Panc1 (cell line): ENCODE measurements at regions of chr13 and their contacts with region 1.

Region 1: GRCh38 chr13:99908140-99908803 is 63.3 kb downstream of the ZIC5 start:
- DNase-seq: no peak
- ATAC-seq: no peak
- H3K4me3 ChIP-seq: no peak overlapping the region
- H3K27ac ChIP-seq: peak overlapping the region; percentile 66
- H3K4me1 ChIP-seq: peaks cover 33% of the 10 kb centered on the region
- H3K27me3 ChIP-seq: no peaks in the 10 kb centered on the region
- CTCF ChIP-seq: no peak

Region 2: GRCh38 chr13:99656092-99656745 is 252.1 kb before region 1 on chr13:
- CTCF ChIA-PET with region 1: no interaction called
- POLR2A ChIA-PET with region 1: no interaction called
- in situ Hi-C with region 1: no loop called
- intact Hi-C with region 1: loop called (anchors 10 kb)
- DNase-seq: peak; percentile 61
- ATAC-seq: peak; percentile 87
- H3K4me3 ChIP-seq: no peak overlapping the region
- H3K27ac ChIP-seq: peak overlapping the region; percentile 44; the same call in 1 of the 2 replicates
- H3K4me1 ChIP-seq: peaks cover 12% of the 10 kb centered on the region
- H3K27me3 ChIP-seq: no peaks in the 10 kb centered on the region
- CTCF ChIP-seq: peak; percentile 78